Panc1 (cell line): ENCODE measurements at regions of chr11 and their contacts with region 1.

Region 1: DNA sequence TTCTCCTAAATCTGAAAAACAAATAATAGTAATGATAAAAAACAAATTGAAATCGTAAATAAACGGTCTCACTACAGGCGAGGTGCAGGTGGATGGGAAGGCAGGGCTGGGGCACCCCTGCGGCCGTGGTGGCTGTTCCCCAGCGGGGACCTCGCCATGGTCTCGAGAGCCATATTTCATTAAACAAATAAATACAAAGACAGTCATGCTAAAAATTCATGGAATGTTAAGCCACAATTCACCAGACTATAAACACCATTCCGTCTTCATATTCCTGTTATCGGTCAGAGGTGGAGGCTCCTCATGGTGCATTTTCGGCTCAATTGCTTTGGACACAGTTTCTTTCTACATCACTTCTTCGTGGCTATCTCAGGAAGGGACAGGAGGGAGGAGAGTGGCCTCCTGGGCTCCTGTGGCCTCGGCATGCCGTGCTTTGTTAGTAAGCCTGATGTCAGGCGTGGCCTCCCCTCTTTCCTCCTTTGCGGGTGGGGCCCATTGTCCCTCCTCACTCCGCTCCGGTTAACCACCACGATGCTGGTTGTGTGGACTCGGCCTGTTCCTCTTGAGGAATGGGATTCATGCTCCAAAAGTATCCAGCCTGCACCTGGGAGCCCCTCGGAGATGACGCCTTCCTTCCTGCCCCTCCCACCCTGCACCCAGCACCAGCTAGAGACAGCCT is 16.1 kb upstream of the BRSK2 start:
- DNase-seq: no peak
- ATAC-seq: peak; percentile 39
- H3K4me3 ChIP-seq: no peak overlapping the region
- H3K27ac ChIP-seq: peak overlapping the region; percentile 48
- H3K4me1 ChIP-seq: peaks cover 18% of the 10 kb centered on the region
- H3K27me3 ChIP-seq: no peaks in the 10 kb centered on the region
- CTCF ChIP-seq: no peak

Region 2: GRCh38 chr11:695538-696248 is 678.0 kb before region 1 on chr11 and contains the start of gene TMEM80:
- CTCF ChIA-PET with region 1: interaction called, 13 read pairs
- POLR2A ChIA-PET with region 1: no interaction called
- in situ Hi-C with region 1: no loop called
- intact Hi-C with region 1: no loop called
- DNase-seq: peak; percentile 88
- ATAC-seq: peak; percentile 86
- H3K4me3 ChIP-seq: peak within 1 kb of the TSS; percentile 75 to 78
- H3K27ac ChIP-seq: peak within 1 kb of the TSS; percentile 96
- H3K4me1 ChIP-seq: peaks cover 55% of the 10 kb centered on the region
- H3K27me3 ChIP-seq: no peaks in the 10 kb centered on the region
- CTCF ChIP-seq: no peak
- total RNA-seq, gene TMEM80: 45.2 TPM

Region 3: DNA sequence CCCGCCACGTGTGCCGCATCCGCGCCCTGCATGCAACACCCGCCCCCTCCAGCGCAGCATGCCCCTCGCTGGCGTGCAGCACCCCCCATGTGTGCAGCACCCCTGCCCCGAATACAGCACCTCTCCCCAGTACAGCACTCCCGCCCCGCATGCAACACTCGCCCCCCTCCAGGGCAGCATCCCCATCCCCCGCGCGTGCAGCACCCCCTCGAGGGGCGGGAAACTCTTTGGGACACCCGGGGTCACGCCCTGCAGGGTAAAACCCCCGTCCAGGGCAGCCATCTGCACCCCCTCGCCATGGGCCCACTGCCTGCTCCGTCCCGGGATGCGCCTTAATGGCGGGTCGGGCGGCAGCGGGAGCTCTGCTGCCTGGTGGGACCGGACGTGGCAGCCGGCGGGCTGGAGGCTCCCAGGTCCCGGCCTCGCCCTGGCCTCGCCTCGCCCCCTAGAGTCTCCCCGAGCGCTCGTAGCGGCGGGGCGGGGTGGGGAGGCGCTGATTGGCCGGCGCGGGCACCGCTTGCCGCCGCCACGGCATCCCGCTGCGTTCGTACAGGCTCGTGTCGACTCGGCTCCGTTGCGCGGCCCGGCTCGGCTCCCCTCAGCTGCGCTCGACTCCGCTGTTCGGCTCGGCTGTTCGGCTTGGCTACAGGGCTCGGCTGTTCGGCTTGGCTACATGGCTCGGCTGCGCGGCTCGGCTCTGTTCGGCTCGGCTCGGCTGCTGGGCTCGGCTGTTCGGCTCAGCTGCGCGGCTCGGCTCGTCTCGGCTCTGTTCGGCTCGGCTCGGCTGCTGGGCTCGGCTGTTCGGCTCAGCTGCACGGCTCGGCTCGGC is 15.6 kb after region 1 on chr11:
- CTCF ChIA-PET with region 1: interaction called, 11 read pairs
- POLR2A ChIA-PET with region 1: interaction called, 7 read pairs
- in situ Hi-C with region 1: no loop called
- intact Hi-C with region 1: no loop called
- DNase-seq: peak; percentile 81
- ATAC-seq: peak; percentile 97
- H3K4me3 ChIP-seq: peak overlapping the region; percentile 67 to 73
- H3K27ac ChIP-seq: peak overlapping the region; percentile 89
- H3K4me1 ChIP-seq: peaks cover 22% of the 10 kb centered on the region
- H3K27me3 ChIP-seq: no peaks in the 10 kb centered on the region
- CTCF ChIP-seq: no peak; the same call in 1 of the 2 replicates

Region 4: DNA sequence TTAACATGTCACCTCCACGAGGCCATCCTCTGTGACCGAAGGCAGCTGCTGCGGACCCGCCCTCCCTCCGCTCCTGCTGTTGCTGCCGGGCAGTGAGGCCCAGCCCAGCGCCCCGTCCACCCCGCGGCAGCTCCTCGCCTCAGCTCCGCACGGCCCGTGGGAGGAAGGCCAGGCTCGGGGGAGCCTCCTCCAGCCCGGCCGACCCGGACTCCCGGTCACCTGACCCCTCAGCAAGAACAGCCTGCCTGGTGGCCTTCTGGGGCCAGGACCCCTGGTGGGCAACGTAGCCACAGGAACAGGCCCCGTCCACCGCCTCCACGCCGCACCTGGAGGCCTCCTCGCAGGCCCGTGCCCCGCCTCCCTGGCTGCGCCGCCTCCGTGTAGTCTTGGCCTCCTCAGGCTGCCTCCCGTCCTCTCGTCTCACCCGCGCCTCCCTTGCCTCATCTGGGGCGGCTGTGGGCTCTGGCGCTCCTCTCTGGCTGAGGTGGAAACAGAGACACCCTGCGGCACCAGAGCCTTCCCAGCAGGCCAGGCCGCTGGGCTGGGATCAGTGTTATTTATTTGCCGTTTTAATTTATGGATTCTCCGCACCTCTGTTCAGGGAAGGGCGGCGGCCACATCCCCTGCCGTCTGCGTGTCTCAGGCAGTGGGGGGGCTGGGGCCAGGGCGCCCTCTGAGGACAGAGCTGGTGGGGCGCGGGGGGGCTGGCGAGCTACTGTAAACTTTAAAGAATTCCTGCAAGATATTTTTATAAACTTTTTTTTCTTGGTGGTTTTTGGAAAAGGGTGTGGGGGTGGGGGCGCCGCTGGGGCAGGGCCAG is 87.5 kb after region 1 on chr11:
- CTCF ChIA-PET with region 1: no interaction called
- POLR2A ChIA-PET with region 1: interaction called, 15 read pairs
- in situ Hi-C with region 1: no loop called
- intact Hi-C with region 1: no loop called
- DNase-seq: no peak
- ATAC-seq: no peak
- H3K4me3 ChIP-seq: no peak overlapping the region
- H3K27ac ChIP-seq: no peak overlapping the region
- H3K4me1 ChIP-seq: peaks cover 14% of the 10 kb centered on the region
- H3K27me3 ChIP-seq: no peaks in the 10 kb centered on the region
- CTCF ChIP-seq: no peak

Region 5: DNA sequence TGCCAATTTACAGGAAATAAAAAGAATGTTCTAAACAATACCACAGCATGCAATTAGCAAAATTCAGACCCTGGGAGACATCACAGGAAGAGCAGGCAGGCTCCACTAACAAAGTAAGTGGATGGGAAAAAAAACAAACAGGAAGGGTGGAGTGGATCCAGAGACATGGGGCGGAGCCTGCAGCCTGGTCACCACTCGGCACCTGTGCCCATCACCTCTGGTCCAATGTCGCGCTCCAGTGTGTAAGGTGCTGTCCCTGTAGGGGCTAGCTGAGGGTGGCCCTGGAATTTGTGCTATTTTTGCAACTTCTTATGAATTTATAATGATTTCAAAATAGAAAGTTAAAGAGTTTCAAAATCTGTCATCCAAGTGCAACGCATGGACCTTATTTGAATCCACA is 123.9 kb after region 1 on chr11:
- CTCF ChIA-PET with region 1: no interaction called
- POLR2A ChIA-PET with region 1: no interaction called
- in situ Hi-C with region 1: loop called (anchors 10 kb)
- intact Hi-C with region 1: no loop called
- DNase-seq: no peak
- ATAC-seq: no peak
- H3K4me3 ChIP-seq: no peak overlapping the region
- H3K27ac ChIP-seq: no peak overlapping the region
- H3K4me1 ChIP-seq: no peaks in the 10 kb centered on the region
- H3K27me3 ChIP-seq: no peaks in the 10 kb centered on the region
- CTCF ChIP-seq: no peak